ENCODE measurements at regions of chr9 and their contacts with region 1.

Region 1: GRCh38 chr9:118162711-118163110 is 458.5 kb downstream of the TLR4 start:
- DNase-seq: no peak
- H3K4me3 Mint-ChIP-seq: no peak overlapping the region
- H3K27ac Mint-ChIP-seq: no peak overlapping the region
- H3K4me1 Mint-ChIP-seq: no peaks in the 10 kb centered on the region
- H3K27me3 Mint-ChIP-seq: peaks cover 9% of the 10 kb centered on the region

Region 2: GRCh38 chr9:119365291-119366027 is 1202.7 kb after region 1 on chr9:
- CTCF ChIA-PET with region 1: no interaction called
- intact Hi-C with region 1: loop called (anchors 10 kb)
- DNase-seq: peak; percentile 6
- H3K4me3 Mint-ChIP-seq: no peak overlapping the region
- H3K27ac Mint-ChIP-seq: no peak overlapping the region
- H3K4me1 Mint-ChIP-seq: peaks cover 6% of the 10 kb centered on the region
- H3K27me3 Mint-ChIP-seq: peaks cover 37% of the 10 kb centered on the region

Measured in activated naive CD4-positive, alpha-beta T cell treated with anti-CD3 and anti-CD28 coated beads for 36 hours (primary cell).